Dorsolateral prefrontal cortex (tissue), 120 donors: ENCODE measurements at regions of chr22 and their contacts with region 1.

Region 1: GRCh38 chr22:39431821-39432251 is 25.0 kb upstream of the MGAT3 start:
- DNase-seq: no peak
- H3K4me3 ChIP-seq: peak overlapping the region in 10 of 59 donors; percentile 1 to 44 (median 18)
- H3K27ac ChIP-seq: peak overlapping the region; percentile 80 to 99 (median 96)
- H3K27me3 ChIP-seq: no peaks in the 10 kb centered on the region
- CTCF ChIP-seq: no peak

Region 2: GRCh38 chr22:39090426-39091064 is 341.3 kb before region 1 on chr22:
- intact Hi-C with region 1: no loop called
- DNase-seq: no peak
- H3K4me3 ChIP-seq: no peak overlapping the region
- H3K27ac ChIP-seq: no peak overlapping the region
- H3K27me3 ChIP-seq: no peaks in the 10 kb centered on the region
- CTCF ChIP-seq: no peak

Region 3: GRCh38 chr22:39395936-39396796 is 35.7 kb before region 1 on chr22:
- intact Hi-C with region 1: loop called (anchors 5 kb)
- DNase-seq: peak in 1 of 10 donors; percentile 88
- H3K4me3 ChIP-seq: no peak overlapping the region
- H3K27ac ChIP-seq: peak overlapping the region in 2 of 59 donors; percentile 48 to 99
- H3K27me3 ChIP-seq: no peaks in the 10 kb centered on the region
- CTCF ChIP-seq: no peak